Left ventricle myocardium superior (tissue), 1 donor: ENCODE measurements at regions of chr1 and their contacts with region 1.

Region 1: GRCh38 chr1:225474986-225475820 is 47.4 kb upstream of the LBR start:
- DNase-seq: peak; percentile 78
- ATAC-seq: peak; percentile 92

Region 2: GRCh38 chr1:225977937-225978748 is 502.9 kb after region 1 on chr1:
- intact Hi-C with region 1: loop called (anchors 5 kb)
- DNase-seq: no peak
- ATAC-seq: no peak